ENCODE measurements at regions of chr3 and their contacts with region 1.

Region 1: DNA sequence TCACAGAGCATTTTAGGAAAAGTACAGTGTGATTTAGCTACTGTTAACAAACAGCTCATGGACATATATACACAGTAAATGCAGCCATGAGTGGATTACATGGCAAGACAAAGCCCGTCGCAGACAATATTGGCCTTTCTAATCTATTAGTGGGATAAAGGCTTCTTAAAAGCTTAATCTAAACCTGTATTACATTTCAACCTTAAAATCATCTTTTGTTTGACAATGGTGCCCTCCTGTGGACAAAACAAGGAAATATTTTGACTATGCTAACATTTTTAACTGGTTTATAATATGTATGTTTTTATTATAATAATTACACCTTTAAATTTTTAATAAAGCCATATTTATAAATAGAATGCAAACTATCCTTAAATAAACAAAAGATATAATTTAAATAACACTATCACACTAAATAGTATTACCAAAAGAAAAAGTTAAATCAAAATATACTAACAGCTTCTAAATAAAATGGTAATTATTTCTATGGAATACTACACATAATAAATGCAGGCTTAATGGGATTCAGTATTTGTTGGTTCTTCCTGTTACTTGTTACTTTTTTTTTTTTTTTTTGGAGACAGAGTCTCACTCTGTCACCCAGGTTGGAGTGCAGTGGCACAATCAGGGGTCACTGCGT is 38.6 kb downstream of the TAFA4 start:
- DNase-seq: no peak
- H3K4me3 ChIP-seq: no peak overlapping the region
- H3K27ac ChIP-seq: no peak overlapping the region
- H3K4me1 ChIP-seq: no peaks in the 10 kb centered on the region
- H3K27me3 ChIP-seq: peaks cover 24% of the 10 kb centered on the region
- CTCF ChIP-seq: peak; percentile 60

Region 2: GRCh38 chr3:66962664-66963063 is 1931.1 kb before region 1 on chr3:
- intact Hi-C with region 1: loop called (anchors 10 kb)
- DNase-seq: no peak
- H3K4me3 ChIP-seq: no peak overlapping the region
- H3K27ac ChIP-seq: no peak overlapping the region
- H3K4me1 ChIP-seq: no peaks in the 10 kb centered on the region
- H3K27me3 ChIP-seq: peaks cover 96% of the 10 kb centered on the region
- CTCF ChIP-seq: no peak